GM12878 (cell line): ENCODE measurements at regions of chr4 and their contacts with region 1.

Region 1: DNA sequence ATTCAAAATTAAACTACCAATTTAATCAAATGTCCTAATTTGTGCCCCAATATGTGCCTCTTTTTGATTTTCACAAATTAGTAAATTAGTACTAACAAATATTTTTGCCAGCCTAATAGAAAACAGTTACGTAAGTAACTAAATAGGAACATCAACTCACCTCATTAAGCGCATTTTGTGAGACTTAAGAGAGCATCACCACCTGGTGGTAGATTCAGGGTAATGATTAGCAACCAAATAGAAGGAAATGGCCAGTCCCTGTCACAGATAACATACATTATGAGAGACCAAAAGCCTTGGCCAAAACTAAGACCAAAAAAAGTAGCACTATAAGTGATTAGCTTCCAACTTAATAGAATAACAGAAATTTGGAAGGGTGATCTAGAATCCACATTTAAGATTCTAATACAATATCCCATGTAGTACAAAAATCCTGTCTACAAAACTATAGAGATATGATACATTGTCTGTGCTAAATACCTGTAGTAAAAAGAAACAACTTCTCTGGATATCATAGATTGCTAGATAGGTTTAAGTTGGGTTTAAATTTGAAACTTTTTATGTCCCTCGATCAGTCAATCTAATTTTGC is 46.7 kb downstream of the C4orf46 start:
- DNase-seq: peak; percentile 11
- ATAC-seq: peak; percentile 93
- H3K4me3 ChIP-seq: no peak overlapping the region
- H3K27ac ChIP-seq: no peak overlapping the region
- H3K4me1 ChIP-seq: no peaks in the 10 kb centered on the region
- H3K27me3 ChIP-seq: no peaks in the 10 kb centered on the region; a peak in 1 of 4 replicates
- CTCF ChIP-seq: peak; percentile 62 to 76 (median 68)
- EP300 ChIP-seq: no peak
- POLR2A ChIP-seq: no peak
- RAD21 ChIP-seq: peak; percentile 90

Region 2: DNA sequence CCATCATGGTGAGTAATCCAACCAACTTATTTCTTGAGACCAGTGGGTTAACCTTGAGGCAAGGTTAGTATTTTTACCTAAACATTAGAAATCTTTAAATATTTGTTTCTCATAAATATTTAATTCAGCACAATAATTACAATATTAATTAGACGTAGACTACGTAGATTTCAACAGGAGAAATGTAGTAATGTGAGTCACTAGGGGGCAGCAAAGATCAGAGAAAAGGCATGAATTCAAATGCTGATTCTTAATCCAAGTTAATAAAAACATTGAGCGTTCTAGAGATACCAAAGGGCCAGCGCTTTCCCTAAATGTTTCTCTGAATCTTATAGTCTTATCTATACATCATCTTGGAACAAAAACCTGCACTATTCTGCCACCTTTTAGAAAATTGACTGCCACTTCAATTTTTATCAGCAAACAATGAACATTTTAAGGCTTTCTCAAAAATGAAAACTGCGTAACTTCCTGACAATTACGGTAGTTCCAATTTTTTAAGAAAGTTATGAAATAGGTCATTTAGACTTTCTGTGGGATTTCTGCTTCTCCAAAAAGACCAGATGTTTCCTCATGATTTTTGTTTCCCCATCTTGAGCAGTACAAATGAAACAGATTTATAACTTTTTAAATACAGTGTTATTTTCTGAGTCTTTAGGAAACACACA is 632.8 kb before region 1 on chr4:
- CTCF ChIA-PET with region 1: no interaction called
- POLR2A ChIA-PET with region 1: no interaction called
- RAD21 ChIA-PET with region 1: no interaction called
- SMC1A ChIA-PET with region 1: no interaction called
- in situ Hi-C with region 1: no loop called
- intact Hi-C with region 1: loop called (anchors 10 kb)
- DNase-seq: no peak
- ATAC-seq: peak; percentile 58
- H3K4me3 ChIP-seq: no peak overlapping the region
- H3K27ac ChIP-seq: no peak overlapping the region
- H3K4me1 ChIP-seq: no peaks in the 10 kb centered on the region
- H3K27me3 ChIP-seq: no peaks in the 10 kb centered on the region
- CTCF ChIP-seq: peak; percentile 48 to 59 (median 52)
- EP300 ChIP-seq: no peak
- POLR2A ChIP-seq: no peak
- RAD21 ChIP-seq: peak; percentile 67

Region 3: DNA sequence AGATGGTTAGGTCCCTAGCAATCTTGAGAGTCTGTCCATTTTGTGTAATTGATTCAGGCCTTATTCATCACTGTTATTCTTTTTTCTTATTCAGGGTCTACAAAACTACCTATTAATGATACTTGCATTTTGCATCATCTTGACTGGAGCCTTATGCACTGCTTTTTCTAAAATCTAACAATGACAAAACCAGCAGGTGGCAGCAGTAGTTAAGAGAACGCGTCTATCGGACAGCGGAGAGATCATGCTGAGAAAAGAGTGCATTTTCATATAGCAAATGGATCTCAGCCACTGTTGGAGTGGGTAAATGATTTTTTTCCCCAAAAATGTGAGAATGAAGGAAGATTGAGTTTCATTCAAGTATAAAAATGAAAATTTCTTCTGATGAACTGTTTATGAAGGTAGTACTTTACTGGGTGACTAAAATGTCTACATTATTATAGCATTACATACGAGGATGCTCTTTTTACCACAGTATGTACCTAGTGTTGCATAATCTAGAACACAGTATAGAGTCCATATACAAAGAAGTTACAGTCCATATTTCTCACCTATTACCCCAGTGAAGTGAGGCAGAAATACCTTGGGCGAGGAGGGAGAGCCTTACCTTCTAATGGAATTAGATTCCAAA is 371.5 kb before region 1 on chr4:
- CTCF ChIA-PET with region 1: interaction called, 15 read pairs
- POLR2A ChIA-PET with region 1: no interaction called
- RAD21 ChIA-PET with region 1: interaction called, 3 read pairs
- SMC1A ChIA-PET with region 1: interaction called, 5 read pairs
- in situ Hi-C with region 1: loop called (anchors 5 kb)
- intact Hi-C with region 1: loop called (anchors 2 kb)
- DNase-seq: no peak
- ATAC-seq: peak; percentile 89
- H3K4me3 ChIP-seq: no peak overlapping the region
- H3K27ac ChIP-seq: no peak overlapping the region
- H3K4me1 ChIP-seq: no peaks in the 10 kb centered on the region
- H3K27me3 ChIP-seq: no peaks in the 10 kb centered on the region
- CTCF ChIP-seq: peak; percentile 50 to 72 (median 63); a peak in 5 of 6 replicates
- EP300 ChIP-seq: no peak
- POLR2A ChIP-seq: no peak
- RAD21 ChIP-seq: peak; percentile 67

Region 4: GRCh38 chr4:158259955-158260575 is 364.9 kb before region 1 on chr4:
- CTCF ChIA-PET with region 1: interaction called, 15 read pairs
- POLR2A ChIA-PET with region 1: no interaction called
- RAD21 ChIA-PET with region 1: interaction called, 3 read pairs
- SMC1A ChIA-PET with region 1: interaction called, 5 read pairs
- in situ Hi-C with region 1: no loop called
- intact Hi-C with region 1: loop called (anchors 1 kb)
- DNase-seq: no peak
- ATAC-seq: peak; percentile 65
- H3K4me3 ChIP-seq: no peak overlapping the region
- H3K27ac ChIP-seq: no peak overlapping the region
- H3K4me1 ChIP-seq: no peaks in the 10 kb centered on the region
- H3K27me3 ChIP-seq: no peaks in the 10 kb centered on the region
- CTCF ChIP-seq: peak in 2 of 3 experiments; percentile 24 to 41; a peak in 2 of 6 replicates
- EP300 ChIP-seq: no peak
- POLR2A ChIP-seq: no peak
- RAD21 ChIP-seq: peak; percentile 36; the same call in 1 of the 2 replicates

Region 5: GRCh38 chr4:158410272-158410671 is 214.7 kb before region 1 on chr4:
- CTCF ChIA-PET with region 1: interaction called, 3 read pairs
- POLR2A ChIA-PET with region 1: no interaction called
- RAD21 ChIA-PET with region 1: no interaction called
- SMC1A ChIA-PET with region 1: no interaction called
- in situ Hi-C with region 1: no loop called
- intact Hi-C with region 1: loop called (anchors 5 kb)
- DNase-seq: no peak
- ATAC-seq: no peak
- H3K4me3 ChIP-seq: no peak overlapping the region
- H3K27ac ChIP-seq: no peak overlapping the region
- H3K4me1 ChIP-seq: no peaks in the 10 kb centered on the region
- H3K27me3 ChIP-seq: no peaks in the 10 kb centered on the region
- CTCF ChIP-seq: no peak
- EP300 ChIP-seq: no peak
- POLR2A ChIP-seq: no peak
- RAD21 ChIP-seq: peak; percentile 12; the same call in 1 of the 2 replicates

Region 6: GRCh38 chr4:158496030-158496741 is 128.8 kb before region 1 on chr4:
- CTCF ChIA-PET with region 1: interaction called, 11 read pairs
- POLR2A ChIA-PET with region 1: no interaction called
- RAD21 ChIA-PET with region 1: interaction called, 6 read pairs
- SMC1A ChIA-PET with region 1: interaction called, 10 read pairs
- in situ Hi-C with region 1: no loop called
- intact Hi-C with region 1: loop called (anchors 1 kb)
- DNase-seq: no peak
- ATAC-seq: peak; percentile 59
- H3K4me3 ChIP-seq: no peak overlapping the region
- H3K27ac ChIP-seq: no peak overlapping the region
- H3K4me1 ChIP-seq: no peaks in the 10 kb centered on the region
- H3K27me3 ChIP-seq: no peaks in the 10 kb centered on the region; a peak in 1 of 4 replicates
- CTCF ChIP-seq: peak; percentile 47 to 72 (median 53); a peak in 5 of 6 replicates
- EP300 ChIP-seq: no peak
- POLR2A ChIP-seq: no peak
- RAD21 ChIP-seq: peak; percentile 39